ENCODE measurements at regions of chr16 and their contacts with region 1.

Region 1: GRCh38 chr16:30805370-30806169 is 18.6 kb upstream of the ZNF629 start:
- DNase-seq: peak in 1 of 2 experiments; percentile 84
- H3K4me3 ChIP-seq: peak overlapping the region; percentile 60 to 78 (median 68)
- H3K27ac ChIP-seq: no peak overlapping the region
- H3K4me1 ChIP-seq: peaks cover 0 to 6% (median 4%) of the 10 kb centered on the region in 4 experiments; a peak in 4 of 7 replicates
- H3K27me3 ChIP-seq: peaks cover 0 to 18% (median 11%) of the 10 kb centered on the region in 4 experiments; a peak in 6 of 7 replicates
- CTCF ChIP-seq: no peak
- EP300 ChIP-seq: no peak; a peak in 1 of 3 replicates
- POLR2A ChIP-seq: peak in 1 of 2 experiments; percentile 86; a peak in 2 of 3 replicates
- RAD21 ChIP-seq: no peak

Region 2: DNA sequence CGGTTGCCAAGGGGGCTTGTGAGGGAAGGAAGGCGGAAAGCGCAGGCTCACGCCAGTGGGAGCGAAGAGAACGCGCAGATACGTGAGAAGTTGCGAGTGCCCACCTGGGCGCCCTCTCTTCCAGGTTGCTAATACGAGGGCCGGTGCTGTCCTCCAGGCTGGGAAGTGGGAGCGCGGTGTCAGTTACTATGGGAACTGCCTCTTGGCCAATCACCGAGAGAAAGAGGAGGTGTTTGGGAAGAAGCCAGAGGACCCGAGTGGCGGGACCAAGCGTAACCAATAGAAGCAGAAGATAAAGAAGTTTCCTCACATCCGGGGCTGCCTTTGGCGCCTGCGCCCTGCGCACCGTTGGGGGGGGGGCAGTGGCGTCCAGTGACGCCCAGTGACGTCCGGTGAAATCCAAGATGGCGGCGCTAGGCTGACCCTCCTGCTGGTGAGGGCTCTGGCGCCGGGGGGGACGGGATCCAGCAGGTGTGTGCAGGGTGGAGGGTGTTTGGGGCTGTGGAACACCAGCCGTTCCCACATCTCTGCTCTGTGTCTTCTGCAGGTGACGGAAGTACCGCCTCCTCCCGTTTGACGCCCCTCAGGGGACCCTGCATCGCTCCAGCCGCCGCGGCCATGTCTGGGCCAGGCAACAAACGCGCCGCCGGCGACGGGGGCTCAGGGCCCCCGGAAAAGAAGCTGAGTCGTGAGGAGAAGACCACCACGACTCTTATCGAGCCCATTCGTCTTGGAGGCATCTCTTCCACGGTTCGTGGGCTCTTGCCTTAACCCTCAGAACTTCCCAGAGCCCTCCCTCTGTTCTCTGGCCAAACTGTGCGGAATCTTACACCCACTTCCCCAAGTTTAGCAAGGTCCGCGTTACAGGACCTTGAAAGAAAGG is 43.4 kb before region 1 on chr16 and contains the starts of genes CFAP119 and RNF40:
- CTCF ChIA-PET with region 1: no interaction called
- POLR2A ChIA-PET with region 1: no interaction called
- DNase-seq: peak; percentile 86 to 98
- H3K4me3 ChIP-seq: peak within 1 kb of the TSS; percentile 80 to 97 (median 92)
- H3K27ac ChIP-seq: peak within 1 kb of the TSS; percentile 88
- H3K4me1 ChIP-seq: peaks cover 0 to 11% (median 2%) of the 10 kb centered on the region in 4 experiments; a peak in 4 of 7 replicates
- H3K27me3 ChIP-seq: no peaks in the 10 kb centered on the region; a peak in 1 of 7 replicates
- CTCF ChIP-seq: no peak
- EP300 ChIP-seq: no peak
- POLR2A ChIP-seq: peak; percentile 66 to 84
- RAD21 ChIP-seq: no peak
- total RNA-seq, gene CFAP119: 5.2 and 6.0 TPM in 2 replicates
- total RNA-seq, gene RNF40: 68.7 and 70.8 TPM in 2 replicates

Region 3: DNA sequence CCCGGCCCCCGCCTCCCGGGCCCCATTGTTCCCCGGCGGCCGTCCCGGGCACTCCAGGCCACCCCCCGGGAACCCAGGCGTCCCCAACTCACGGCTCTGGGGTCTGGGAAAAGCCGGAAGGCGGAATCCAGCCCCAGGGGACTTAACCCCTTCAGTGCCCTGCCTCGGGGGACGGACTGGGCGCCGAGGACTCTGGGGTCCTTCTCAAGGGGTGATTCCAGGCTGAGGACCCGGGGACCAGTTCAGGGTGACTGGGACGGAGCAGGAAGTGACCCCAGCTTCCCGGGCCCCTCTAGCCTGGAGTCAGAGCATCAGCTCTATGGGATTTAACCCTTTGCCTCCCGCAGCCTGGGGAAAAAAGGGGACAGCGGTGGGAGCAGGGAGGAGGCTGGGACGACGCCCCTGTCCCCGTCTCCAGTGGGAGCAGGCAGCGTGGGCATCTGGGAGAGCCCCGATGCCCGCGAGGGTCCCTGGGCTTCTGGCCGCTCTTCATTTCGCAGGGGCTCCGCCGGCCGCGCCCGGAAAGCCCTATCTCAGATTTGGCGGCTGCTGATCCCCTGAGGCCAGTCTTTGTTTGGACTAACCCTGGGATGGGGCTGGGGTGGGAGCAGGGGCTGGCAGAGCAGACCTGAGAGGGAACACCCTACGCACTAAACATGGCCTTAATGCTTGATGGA is 18.5 kb before region 1 on chr16 and contains the start of gene ZNF629:
- CTCF ChIA-PET with region 1: interaction called, 21 read pairs
- POLR2A ChIA-PET with region 1: interaction called, 40 read pairs
- DNase-seq: peak in 1 of 2 experiments; percentile 87
- H3K4me3 ChIP-seq: peak within 1 kb of the TSS; percentile 70 to 99 (median 93)
- H3K27ac ChIP-seq: peak within 1 kb of the TSS; percentile 79
- H3K4me1 ChIP-seq: peaks cover 0 to 8% (median 0%) of the 10 kb centered on the region in 4 experiments; a peak in 2 of 7 replicates
- H3K27me3 ChIP-seq: no peaks in the 10 kb centered on the region; a peak in 1 of 7 replicates
- CTCF ChIP-seq: peak in 1 of 3 experiments; percentile 17; a peak in 1 of 4 replicates
- EP300 ChIP-seq: 0 out of 3 replicates have a peak, but pooled peaks of 1 of the 2 experiments have one; percentile 11
- POLR2A ChIP-seq: peak in 1 of 2 experiments; percentile 59; a peak in 2 of 3 replicates
- RAD21 ChIP-seq: peak in 1 of 2 experiments; percentile 17; a peak in 1 of 4 replicates
- total RNA-seq, gene ZNF629: 19.3 and 19.5 TPM in 2 replicates

Region 4: GRCh38 chr16:30793508-30794069 is 12.0 kb before region 1 on chr16:
- CTCF ChIA-PET with region 1: interaction called, 21 read pairs
- POLR2A ChIA-PET with region 1: interaction called, 40 read pairs
- DNase-seq: no peak
- H3K4me3 ChIP-seq: no peak overlapping the region
- H3K27ac ChIP-seq: no peak overlapping the region
- H3K4me1 ChIP-seq: no peaks in the 10 kb centered on the region
- H3K27me3 ChIP-seq: peaks cover 0 to 3% (median 0%) of the 10 kb centered on the region in 4 experiments; a peak in 2 of 7 replicates
- CTCF ChIP-seq: no peak
- EP300 ChIP-seq: no peak
- POLR2A ChIP-seq: no peak
- RAD21 ChIP-seq: no peak

Region 5: GRCh38 chr16:30853758-30854157 is 48.2 kb after region 1 on chr16:
- CTCF ChIA-PET with region 1: no interaction called
- POLR2A ChIA-PET with region 1: no interaction called
- DNase-seq: no peak
- H3K4me3 ChIP-seq: no peak overlapping the region
- H3K27ac ChIP-seq: no peak overlapping the region
- H3K4me1 ChIP-seq: no peaks in the 10 kb centered on the region
- H3K27me3 ChIP-seq: peaks cover 0 to 8% (median 5%) of the 10 kb centered on the region in 4 experiments; a peak in 3 of 7 replicates
- CTCF ChIP-seq: no peak
- EP300 ChIP-seq: no peak
- POLR2A ChIP-seq: no peak
- RAD21 ChIP-seq: no peak